ENCODE measurements at regions of chr12 and their contacts with region 1.

Region 1: DNA sequence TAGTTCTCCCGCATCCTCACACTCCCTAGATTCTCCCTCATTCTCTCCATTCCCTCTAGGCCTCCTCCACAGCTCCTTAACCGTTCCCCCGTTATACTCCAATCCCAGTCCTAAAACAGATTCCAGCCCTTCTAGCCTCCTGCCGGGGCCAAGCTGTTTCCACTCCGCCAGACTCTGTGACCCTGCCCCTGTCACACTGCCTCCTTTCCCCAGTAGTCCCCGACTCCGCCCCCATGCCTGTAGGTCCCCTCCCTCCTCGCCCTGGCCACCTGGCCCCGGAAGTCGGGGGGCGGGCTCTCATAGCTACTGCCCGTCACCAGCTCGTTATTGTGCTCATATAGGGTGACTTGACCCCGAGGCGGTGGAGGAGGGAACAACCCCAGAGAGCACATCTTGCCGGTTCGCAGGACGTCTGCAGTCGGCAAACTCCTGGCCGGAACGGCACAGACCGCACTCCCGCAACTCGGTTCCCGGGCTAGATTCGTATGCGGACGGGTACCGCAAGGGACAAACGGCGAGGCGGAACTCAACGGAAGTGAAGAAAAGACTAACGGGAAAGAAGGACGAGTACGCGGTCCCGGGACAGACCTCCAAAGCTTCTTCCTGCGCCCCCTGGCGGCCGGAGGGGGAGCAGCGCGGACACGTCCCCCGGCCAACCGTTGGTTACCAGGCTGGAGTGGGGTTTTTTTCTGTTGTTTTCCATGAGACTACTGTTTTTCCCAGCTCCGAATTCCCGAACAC is at the start of gene AAAS:
- DNase-seq: peak; percentile 85 to 97 (median 95)
- ATAC-seq: peak; percentile 82
- H3K4me3 ChIP-seq: peak within 1 kb of the TSS; percentile 67 to 99
- H3K4me3 Mint-ChIP-seq: peak within 1 kb of the TSS; percentile 97
- H3K27ac ChIP-seq: peak within 1 kb of the TSS; percentile 67 to 80
- H3K27ac Mint-ChIP-seq: peak within 1 kb of the TSS; percentile 92
- H3K4me1 ChIP-seq: peaks cover 31% of the 10 kb centered on the region
- H3K4me1 Mint-ChIP-seq: peaks cover 42% of the 10 kb centered on the region
- H3K27me3 ChIP-seq: no peaks in the 10 kb centered on the region
- H3K27me3 Mint-ChIP-seq: no peaks in the 10 kb centered on the region
- CTCF ChIP-seq: peak; percentile 99
- total RNA-seq, gene AAAS: 17.0 to 21.5 TPM

Region 2: DNA sequence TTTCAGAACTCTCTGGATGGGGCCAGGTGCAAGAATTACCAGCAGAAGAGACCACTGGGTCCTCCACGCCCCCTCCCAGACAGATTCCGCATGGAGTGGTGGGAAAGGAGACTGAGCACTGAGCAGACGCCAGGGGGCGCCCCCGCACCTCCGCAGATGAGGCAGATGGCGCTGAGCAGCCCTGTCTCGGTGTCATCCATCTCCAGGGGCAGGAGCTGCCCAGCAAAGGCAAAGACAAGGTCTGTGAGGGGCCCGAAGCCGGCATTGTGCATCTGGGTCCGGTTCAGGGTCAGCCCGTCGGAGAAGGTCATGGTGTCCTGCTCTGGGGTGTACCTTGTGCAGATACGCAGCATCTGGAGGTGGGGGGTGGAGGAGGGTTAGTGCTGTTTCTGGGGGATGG is 107.9 kb before region 1 on chr12:
- CTCF ChIA-PET with region 1: interaction called, 33 read pairs
- POLR2A ChIA-PET with region 1: interaction called, 3 read pairs
- intact Hi-C with region 1: loop called (anchors 1 kb)
- DNase-seq: peak; percentile 59 to 92 (median 85)
- ATAC-seq: peak; percentile 74
- H3K4me3 ChIP-seq: no peak overlapping the region
- H3K4me3 Mint-ChIP-seq: no peak overlapping the region
- H3K27ac ChIP-seq: no peak overlapping the region
- H3K27ac Mint-ChIP-seq: peak overlapping the region; percentile 80
- H3K4me1 ChIP-seq: peaks cover 55% of the 10 kb centered on the region
- H3K4me1 Mint-ChIP-seq: peaks cover 62% of the 10 kb centered on the region
- H3K27me3 ChIP-seq: no peaks in the 10 kb centered on the region
- H3K27me3 Mint-ChIP-seq: no peaks in the 10 kb centered on the region
- CTCF ChIP-seq: peak; percentile 85

Region 3: DNA sequence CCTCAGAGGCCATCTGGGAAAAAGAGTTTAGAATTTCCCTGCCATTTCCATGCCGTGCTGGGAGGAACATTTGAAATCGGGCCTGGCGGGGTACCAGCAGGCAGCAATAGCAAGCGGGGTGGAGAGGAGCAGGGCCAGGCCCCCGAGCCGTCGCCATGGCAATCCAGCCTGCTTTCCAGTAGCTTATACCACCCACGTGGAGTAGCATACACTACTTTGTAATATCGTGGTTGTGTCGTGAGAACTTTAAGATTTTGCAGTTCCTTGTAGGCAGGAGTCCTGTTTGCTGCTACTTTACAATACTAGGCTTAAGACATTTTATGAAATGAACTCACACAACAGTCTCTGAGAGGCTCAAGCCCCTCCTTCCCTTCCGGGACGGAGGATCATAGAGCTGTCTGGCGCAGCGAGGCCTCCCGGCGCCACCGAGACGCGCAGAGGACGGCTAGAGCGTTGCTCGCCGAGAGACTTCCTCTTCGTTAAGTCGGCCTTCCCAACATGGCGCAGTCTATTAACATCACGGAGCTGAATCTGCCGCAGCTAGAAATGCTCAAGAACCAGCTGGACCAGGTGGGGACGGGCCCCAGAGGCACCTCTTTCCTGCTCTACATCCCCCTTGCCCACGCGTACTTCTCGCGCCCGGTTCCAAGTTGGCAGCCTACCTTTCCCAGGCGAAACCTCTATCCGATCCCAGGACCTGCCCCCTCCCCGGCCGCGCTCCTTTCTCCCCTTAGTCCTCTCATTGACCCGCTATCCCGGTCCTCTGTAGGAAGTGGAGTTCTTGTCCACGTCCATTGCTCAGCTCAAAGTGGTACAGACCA is 26.0 kb before region 1 on chr12 and contains the start of gene PFDN5:
- CTCF ChIA-PET with region 1: interaction called, 84 read pairs
- POLR2A ChIA-PET with region 1: interaction called, 58 read pairs
- intact Hi-C with region 1: loop called (anchors 1 kb)
- DNase-seq: peak; percentile 72 to 95 (median 87)
- ATAC-seq: peak; percentile 92
- H3K4me3 ChIP-seq: peak within 1 kb of the TSS; percentile 75 to 88
- H3K4me3 Mint-ChIP-seq: peak within 1 kb of the TSS; percentile 99
- H3K27ac ChIP-seq: peak within 1 kb of the TSS; percentile 80 to 82
- H3K27ac Mint-ChIP-seq: peak within 1 kb of the TSS; percentile 99
- H3K4me1 ChIP-seq: peaks cover 28% of the 10 kb centered on the region
- H3K4me1 Mint-ChIP-seq: peaks cover 51% of the 10 kb centered on the region
- H3K27me3 ChIP-seq: no peaks in the 10 kb centered on the region
- H3K27me3 Mint-ChIP-seq: no peaks in the 10 kb centered on the region
- CTCF ChIP-seq: no peak
- total RNA-seq, gene PFDN5: 741 to 751 TPM

Region 4: GRCh38 chr12:53352331-53353256 is 31.4 kb after region 1 on chr12:
- CTCF ChIA-PET with region 1: interaction called, 202 read pairs
- POLR2A ChIA-PET with region 1: interaction called, 53 read pairs
- intact Hi-C with region 1: loop called in 1 of 2 experiments (anchors 2 kb)
- DNase-seq: peak; percentile 67 to 92 (median 82)
- ATAC-seq: peak; percentile 100
- H3K4me3 ChIP-seq: no peak overlapping the region
- H3K4me3 Mint-ChIP-seq: no peak overlapping the region
- H3K27ac ChIP-seq: no peak overlapping the region
- H3K27ac Mint-ChIP-seq: peak overlapping the region; percentile 8
- H3K4me1 ChIP-seq: no peaks in the 10 kb centered on the region
- H3K4me1 Mint-ChIP-seq: peaks cover 6% of the 10 kb centered on the region
- H3K27me3 ChIP-seq: no peaks in the 10 kb centered on the region
- H3K27me3 Mint-ChIP-seq: no peaks in the 10 kb centered on the region
- CTCF ChIP-seq: peak; percentile 75

Region 5: GRCh38 chr12:53441040-53441833 is 120.0 kb after region 1 on chr12 and contains the start of gene PRR13:
- CTCF ChIA-PET with region 1: no interaction called
- POLR2A ChIA-PET with region 1: interaction called, 4 read pairs
- intact Hi-C with region 1: loop called in 1 of 2 experiments (anchors 1 kb)
- DNase-seq: peak; percentile 95 to 99 (median 99)
- ATAC-seq: peak; percentile 95
- H3K4me3 ChIP-seq: peak within 1 kb of the TSS; percentile 86 to 98
- H3K4me3 Mint-ChIP-seq: peak within 1 kb of the TSS; percentile 97
- H3K27ac ChIP-seq: peak within 1 kb of the TSS; percentile 85 to 94
- H3K27ac Mint-ChIP-seq: peak within 1 kb of the TSS; percentile 97
- H3K4me1 ChIP-seq: peaks cover 36% of the 10 kb centered on the region
- H3K4me1 Mint-ChIP-seq: peaks cover 46% of the 10 kb centered on the region
- H3K27me3 ChIP-seq: no peaks in the 10 kb centered on the region
- H3K27me3 Mint-ChIP-seq: no peaks in the 10 kb centered on the region
- CTCF ChIP-seq: no peak
- total RNA-seq, gene PRR13: 131 to 155 TPM

Region 6: GRCh38 chr12:53675651-53676453 is 354.6 kb after region 1 on chr12 and contains the start of gene ATP5MC2:
- CTCF ChIA-PET with region 1: no interaction called
- POLR2A ChIA-PET with region 1: no interaction called
- intact Hi-C with region 1: loop called in 1 of 2 experiments (anchors 2 kb)
- DNase-seq: peak; percentile 96 to 99 (median 97)
- ATAC-seq: peak; percentile 90
- H3K4me3 ChIP-seq: peak within 1 kb of the TSS; percentile 67 to 92
- H3K4me3 Mint-ChIP-seq: peak within 1 kb of the TSS; percentile 92
- H3K27ac ChIP-seq: peak within 1 kb of the TSS; percentile 60 to 84
- H3K27ac Mint-ChIP-seq: peak within 1 kb of the TSS; percentile 95
- H3K4me1 ChIP-seq: peaks cover 14% of the 10 kb centered on the region
- H3K4me1 Mint-ChIP-seq: peaks cover 36% of the 10 kb centered on the region
- H3K27me3 ChIP-seq: peaks cover 0 to 16% of the 10 kb centered on the region in 2 experiments
- H3K27me3 Mint-ChIP-seq: peaks cover 16% of the 10 kb centered on the region
- CTCF ChIP-seq: peak; percentile 99
- total RNA-seq, gene ATP5MC2: 220 to 229 TPM

Measured in CD8-positive, alpha-beta T cell (primary cell).